ENCODE measurements at regions of chr6 and their contacts with region 1.

Region 1: GRCh38 chr6:13328076-13328874 is at the start of gene TBC1D7:
- DNase-seq: peak; percentile 94
- H3K4me3 ChIP-seq: peak within 1 kb of the TSS; percentile 76 to 92 (median 87)
- H3K27ac ChIP-seq: peak within 1 kb of the TSS; percentile 92
- H3K4me1 ChIP-seq: peaks cover 16% of the 10 kb centered on the region
- H3K27me3 ChIP-seq: no peaks in the 10 kb centered on the region
- CTCF ChIP-seq: no peak
- POLR2A ChIP-seq: peak; percentile 94
- total RNA-seq, gene TBC1D7: 26.6 and 28.1 TPM in 2 replicates

Region 2: GRCh38 chr6:12637960-12638641 is 690.2 kb before region 1 on chr6:
- CTCF ChIA-PET with region 1: interaction called, 5 read pairs
- POLR2A ChIA-PET with region 1: no interaction called
- dilution Hi-C with region 1: no loop called
- intact Hi-C with region 1: loop called (anchors 5 kb)
- DNase-seq: peak; percentile 67
- H3K4me3 ChIP-seq: no peak overlapping the region
- H3K27ac ChIP-seq: no peak overlapping the region
- H3K4me1 ChIP-seq: no peaks in the 10 kb centered on the region
- H3K27me3 ChIP-seq: peaks cover 0 to 2% of the 10 kb centered on the region in 2 experiments
- CTCF ChIP-seq: peak; percentile 78 to 81
- POLR2A ChIP-seq: no peak

Region 3: GRCh38 chr6:13012977-13013680 is 315.1 kb before region 1 on chr6:
- CTCF ChIA-PET with region 1: no interaction called
- POLR2A ChIA-PET with region 1: no interaction called
- dilution Hi-C with region 1: no loop called
- intact Hi-C with region 1: loop called (anchors 5 kb)
- DNase-seq: peak; percentile 18
- H3K4me3 ChIP-seq: peak overlapping the region; percentile 1 to 35 (median 29)
- H3K27ac ChIP-seq: no peak overlapping the region
- H3K4me1 ChIP-seq: peaks cover 4% of the 10 kb centered on the region
- H3K27me3 ChIP-seq: peaks cover 0 to 3% of the 10 kb centered on the region in 2 experiments
- CTCF ChIP-seq: no peak
- POLR2A ChIP-seq: no peak

Region 4: DNA sequence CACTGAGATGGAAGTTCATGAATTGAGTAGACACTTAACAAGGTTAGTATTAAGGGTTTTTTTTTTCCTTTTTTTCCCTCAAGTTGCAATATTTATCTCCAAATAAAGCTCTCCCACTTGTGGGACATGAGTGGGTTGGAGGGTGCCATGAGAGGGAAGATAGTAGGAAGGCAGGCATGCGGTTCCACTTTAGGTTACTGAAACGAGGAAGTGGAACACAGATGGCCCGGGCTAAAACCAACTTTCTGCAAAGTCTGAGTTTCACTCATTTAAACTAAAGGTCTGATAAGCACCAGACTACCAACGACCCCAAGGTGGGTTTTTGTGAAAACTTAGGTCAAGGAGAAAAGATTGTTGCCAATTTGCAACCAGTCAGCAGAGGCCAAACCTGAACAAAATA is 42.1 kb before region 1 on chr6:
- CTCF ChIA-PET with region 1: no interaction called
- POLR2A ChIA-PET with region 1: no interaction called
- dilution Hi-C with region 1: no loop called
- intact Hi-C with region 1: no loop called
- DNase-seq: no peak
- H3K4me3 ChIP-seq: no peak overlapping the region
- H3K27ac ChIP-seq: no peak overlapping the region
- H3K4me1 ChIP-seq: no peaks in the 10 kb centered on the region
- H3K27me3 ChIP-seq: no peaks in the 10 kb centered on the region
- CTCF ChIP-seq: no peak
- POLR2A ChIP-seq: no peak

Region 5: DNA sequence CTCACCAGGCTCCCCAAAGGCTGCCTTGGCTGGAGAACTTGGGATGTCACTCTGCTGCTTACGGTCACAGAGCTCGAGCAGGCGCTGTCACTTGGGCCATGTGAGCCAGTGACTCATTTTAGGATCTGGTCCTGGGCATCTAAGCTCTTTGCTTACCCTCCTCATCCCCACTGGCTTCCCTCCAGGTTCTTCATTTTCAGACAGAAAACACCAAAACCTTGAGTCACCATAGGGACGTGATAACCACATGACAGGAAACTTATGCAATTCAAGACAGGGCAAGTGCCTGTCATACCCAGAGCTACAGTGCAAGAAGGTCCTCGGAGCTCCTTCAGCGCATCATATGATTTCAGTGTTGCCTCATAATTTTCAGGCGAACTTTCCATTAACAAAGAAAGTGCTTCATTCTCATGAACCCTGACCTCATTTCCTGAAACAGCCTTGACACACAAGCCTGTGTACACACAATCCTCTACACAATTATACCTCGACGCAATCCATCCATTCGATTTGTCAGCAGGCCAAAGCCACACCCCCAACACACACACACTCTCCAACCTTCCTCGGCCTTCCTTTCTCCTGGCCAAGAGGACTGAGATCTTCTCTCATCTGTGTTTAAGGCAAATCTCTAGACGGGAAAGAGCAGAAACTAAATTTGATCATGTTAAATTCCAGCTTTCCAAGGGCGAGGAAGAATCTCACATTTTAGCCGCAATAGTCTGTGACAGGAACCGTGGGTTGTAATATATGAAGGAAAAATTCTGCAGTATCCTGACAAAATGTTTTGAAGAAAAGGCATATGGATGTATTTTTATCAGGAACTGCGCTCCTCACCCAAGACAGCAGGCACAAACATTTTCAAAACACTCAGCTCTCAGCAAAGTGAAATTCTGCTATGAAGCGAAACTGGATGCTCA is 25.3 kb before region 1 on chr6:
- CTCF ChIA-PET with region 1: interaction called, 5 read pairs
- POLR2A ChIA-PET with region 1: interaction called, 5 read pairs
- dilution Hi-C with region 1: no loop called
- intact Hi-C with region 1: loop called (anchors 1 kb)
- DNase-seq: peak; percentile 93
- H3K4me3 ChIP-seq: peak overlapping the region in 1 of 3 experiments; percentile 15
- H3K27ac ChIP-seq: peak overlapping the region; percentile 86
- H3K4me1 ChIP-seq: peaks cover 36% of the 10 kb centered on the region
- H3K27me3 ChIP-seq: no peaks in the 10 kb centered on the region
- CTCF ChIP-seq: no peak
- POLR2A ChIP-seq: no peak

Region 6: GRCh38 chr6:13711733-13712598 is 383.7 kb after region 1 on chr6 and contains the start of gene RANBP9:
- CTCF ChIA-PET with region 1: no interaction called
- POLR2A ChIA-PET with region 1: no interaction called
- dilution Hi-C with region 1: no loop called
- intact Hi-C with region 1: loop called (anchors 5 kb)
- DNase-seq: peak; percentile 90
- H3K4me3 ChIP-seq: peak within 1 kb of the TSS; percentile 79 to 99 (median 95)
- H3K27ac ChIP-seq: peak within 1 kb of the TSS; percentile 74
- H3K4me1 ChIP-seq: peaks cover 25% of the 10 kb centered on the region
- H3K27me3 ChIP-seq: no peaks in the 10 kb centered on the region
- CTCF ChIP-seq: no peak
- POLR2A ChIP-seq: peak; percentile 75
- total RNA-seq, gene RANBP9: 40.2 and 44.4 TPM in 2 replicates

Region 7: GRCh38 chr6:13814176-13814937 is 486.1 kb after region 1 on chr6 and contains the start of gene MCUR1:
- CTCF ChIA-PET with region 1: no interaction called
- POLR2A ChIA-PET with region 1: no interaction called
- dilution Hi-C with region 1: no loop called
- intact Hi-C with region 1: no loop called
- DNase-seq: peak; percentile 84
- H3K4me3 ChIP-seq: peak within 1 kb of the TSS; percentile 70 to 94 (median 84)
- H3K27ac ChIP-seq: peak within 1 kb of the TSS; percentile 70
- H3K4me1 ChIP-seq: peaks cover 10% of the 10 kb centered on the region
- H3K27me3 ChIP-seq: no peaks in the 10 kb centered on the region
- CTCF ChIP-seq: peak in 1 of 2 donors; percentile 16
- POLR2A ChIP-seq: peak; percentile 75
- total RNA-seq, gene MCUR1: 18.5 and 21.2 TPM in 2 replicates

Measured in endothelial cell of umbilical vein (primary cell).